ENCODE measurements at regions of chr10 and their contacts with region 1.

Region 1: DNA sequence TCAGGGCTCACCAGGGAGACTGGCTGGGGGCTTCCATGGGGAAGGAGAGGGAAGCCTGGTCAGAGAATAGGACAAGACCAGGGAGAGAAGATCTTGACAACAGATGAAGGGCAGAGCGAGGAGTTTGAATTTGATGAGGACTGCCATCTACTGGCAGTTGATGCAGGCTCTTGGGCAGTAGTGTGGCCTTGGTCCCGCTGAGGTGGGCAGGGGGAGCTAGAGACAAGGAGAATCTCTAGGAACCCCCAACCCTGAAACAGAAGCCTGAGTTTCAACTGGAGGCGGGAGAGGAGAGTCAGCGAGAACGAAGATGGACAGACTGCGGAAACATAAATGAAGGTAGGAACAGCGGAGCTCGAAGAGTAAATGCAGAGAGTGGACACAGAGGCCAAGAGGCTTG is 81.0 kb downstream of the PPP1R3C start:
- DNase-seq: no peak
- ATAC-seq: peak; percentile 66 to 79 (median 76)
- H3K4me3 ChIP-seq: peak overlapping the region; percentile 25
- H3K27ac ChIP-seq: peak overlapping the region; percentile 50
- H3K4me1 ChIP-seq: peaks cover 32% of the 10 kb centered on the region
- H3K27me3 ChIP-seq: no peaks in the 10 kb centered on the region
- CTCF ChIP-seq: peak; percentile 59

Region 2: DNA sequence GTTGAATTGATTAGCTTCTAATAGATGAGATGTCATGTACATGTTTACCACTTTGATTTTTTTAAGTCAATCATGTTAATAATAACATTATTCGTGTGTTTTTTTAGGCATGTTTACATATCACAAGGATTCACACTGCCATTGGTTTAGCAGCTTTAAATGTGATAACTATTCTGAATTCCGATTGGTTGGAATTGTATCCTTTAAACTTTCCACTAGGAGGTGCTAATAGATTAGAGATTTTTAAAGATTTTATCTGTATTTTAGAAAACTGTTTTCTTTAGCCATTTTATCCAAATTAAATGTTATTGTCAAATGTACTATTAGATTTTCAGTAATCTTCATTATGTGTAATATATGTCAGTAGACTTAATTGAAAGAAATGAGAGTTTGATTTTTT is 58.5 kb before region 1 on chr10:
- intact Hi-C with region 1: loop called in 1 of 2 experiments (anchors 5 kb)
- DNase-seq: no peak
- ATAC-seq: peak in 2 of 4 donors; percentile 67 to 78
- H3K4me3 ChIP-seq: no peak overlapping the region
- H3K27ac ChIP-seq: no peak overlapping the region
- H3K4me1 ChIP-seq: peaks cover 15% of the 10 kb centered on the region
- H3K27me3 ChIP-seq: no peaks in the 10 kb centered on the region
- CTCF ChIP-seq: peak; percentile 58

Measured in psoas muscle (tissue), 8 donors.